ENCODE measurements at regions of chr6 and their contacts with region 1.

Region 1: DNA sequence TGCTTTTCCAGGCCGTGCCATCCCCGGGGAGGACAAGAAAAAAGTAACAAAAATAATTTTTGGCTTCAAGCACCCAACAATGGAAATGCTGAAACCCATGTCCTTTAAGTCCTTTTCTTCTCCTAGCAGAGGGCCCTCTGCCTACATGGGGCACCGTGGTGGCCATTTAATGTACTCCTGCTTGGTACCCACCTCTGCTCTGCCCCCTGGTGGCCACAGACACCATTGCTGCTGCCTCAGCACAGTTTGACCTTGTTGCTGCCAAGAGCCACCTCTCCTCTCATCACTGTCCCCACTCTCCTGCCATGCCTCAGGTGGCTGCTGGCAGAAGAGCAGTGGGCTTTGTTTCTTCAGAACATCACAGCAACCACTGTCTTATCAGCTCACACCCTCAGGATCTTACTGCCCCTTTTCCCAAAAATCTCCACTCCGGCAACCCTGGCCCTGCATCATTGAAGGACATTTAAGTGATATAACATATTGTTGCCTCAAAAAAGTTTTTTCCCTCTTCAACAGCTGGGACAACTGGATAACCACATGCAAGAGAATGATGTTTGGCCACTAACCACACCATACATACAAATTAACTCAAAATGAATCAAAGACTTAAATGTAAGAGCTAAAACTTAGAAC is 12.9 kb upstream of the ARMC2 start:
- DNase-seq: peak; percentile 86
- ATAC-seq: peak; percentile 96
- H3K4me3 ChIP-seq: no peak overlapping the region
- H3K4me3 Mint-ChIP-seq: no peak overlapping the region
- H3K27ac ChIP-seq: no peak overlapping the region
- H3K27ac Mint-ChIP-seq: no peak overlapping the region
- H3K4me1 ChIP-seq: peaks cover 14 to 17% of the 10 kb centered on the region in 2 donors
- H3K4me1 Mint-ChIP-seq: peaks cover 25% of the 10 kb centered on the region
- H3K27me3 ChIP-seq: peaks cover 0 to 6% (median 2%) of the 10 kb centered on the region in 4 experiments
- H3K27me3 Mint-ChIP-seq: peaks cover 15% of the 10 kb centered on the region
- CTCF ChIP-seq: peak; percentile 92

Region 2: GRCh38 chr6:108541838-108542759 is 293.2 kb before region 1 on chr6:
- CTCF ChIA-PET with region 1: interaction called, 107 read pairs
- POLR2A ChIA-PET with region 1: no interaction called
- intact Hi-C with region 1: loop called (anchors 1 kb)
- DNase-seq: peak; percentile 87
- ATAC-seq: peak; percentile 84
- H3K4me3 ChIP-seq: no peak overlapping the region
- H3K4me3 Mint-ChIP-seq: no peak overlapping the region
- H3K27ac ChIP-seq: no peak overlapping the region
- H3K27ac Mint-ChIP-seq: no peak overlapping the region
- H3K4me1 ChIP-seq: peaks cover 15 to 17% of the 10 kb centered on the region in 2 donors
- H3K4me1 Mint-ChIP-seq: peaks cover 12% of the 10 kb centered on the region
- H3K27me3 ChIP-seq: peaks cover 0 to 2% (median 0%) of the 10 kb centered on the region in 4 experiments
- H3K27me3 Mint-ChIP-seq: peaks cover 9% of the 10 kb centered on the region
- CTCF ChIP-seq: peak; percentile 93

Region 3: GRCh38 chr6:108592371-108593337 is 242.7 kb before region 1 on chr6:
- CTCF ChIA-PET with region 1: no interaction called
- POLR2A ChIA-PET with region 1: no interaction called
- intact Hi-C with region 1: no loop called
- DNase-seq: peak; percentile 70
- ATAC-seq: peak; percentile 80
- H3K4me3 ChIP-seq: no peak overlapping the region
- H3K4me3 Mint-ChIP-seq: peak overlapping the region; percentile 28
- H3K27ac ChIP-seq: peak overlapping the region; percentile 40 to 46
- H3K27ac Mint-ChIP-seq: peak overlapping the region; percentile 74
- H3K4me1 ChIP-seq: peaks cover 49 to 62% of the 10 kb centered on the region in 2 donors
- H3K4me1 Mint-ChIP-seq: peaks cover 82% of the 10 kb centered on the region
- H3K27me3 ChIP-seq: no peaks in the 10 kb centered on the region
- H3K27me3 Mint-ChIP-seq: no peaks in the 10 kb centered on the region
- CTCF ChIP-seq: no peak

Region 4: GRCh38 chr6:108782179-108783041 is 52.9 kb before region 1 on chr6:
- CTCF ChIA-PET with region 1: interaction called, 8 read pairs
- POLR2A ChIA-PET with region 1: no interaction called
- intact Hi-C with region 1: loop called (anchors 1 kb)
- DNase-seq: peak; percentile 84
- ATAC-seq: peak; percentile 96
- H3K4me3 ChIP-seq: peak overlapping the region; percentile 43 to 78 (median 59)
- H3K4me3 Mint-ChIP-seq: peak overlapping the region; percentile 81
- H3K27ac ChIP-seq: no peak overlapping the region
- H3K27ac Mint-ChIP-seq: no peak overlapping the region
- H3K4me1 ChIP-seq: peaks cover 23 to 31% of the 10 kb centered on the region in 2 donors
- H3K4me1 Mint-ChIP-seq: peaks cover 25% of the 10 kb centered on the region
- H3K27me3 ChIP-seq: peaks cover 0 to 20% (median 8%) of the 10 kb centered on the region in 4 experiments
- H3K27me3 Mint-ChIP-seq: peaks cover 27% of the 10 kb centered on the region
- CTCF ChIP-seq: peak; percentile 84

Region 5: DNA sequence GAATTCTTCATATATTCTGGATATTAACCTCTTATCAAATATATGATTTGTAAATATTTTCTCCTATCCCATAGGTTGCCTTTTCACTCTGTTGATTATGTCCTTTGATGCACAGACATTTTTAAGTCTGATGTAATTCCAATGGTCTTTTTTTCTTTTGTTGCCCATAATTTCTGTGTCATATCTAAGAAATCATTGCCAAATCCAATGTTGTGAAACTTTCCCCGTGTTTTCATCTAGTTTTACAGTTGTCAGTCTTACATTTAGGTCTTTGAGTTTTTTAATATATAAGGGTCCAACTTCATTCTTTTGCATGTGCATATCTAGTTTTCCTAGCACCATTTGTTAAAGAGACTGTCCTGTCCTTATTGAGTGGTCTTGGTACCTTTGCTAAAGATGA is 147.8 kb after region 1 on chr6:
- CTCF ChIA-PET with region 1: no interaction called
- POLR2A ChIA-PET with region 1: no interaction called
- intact Hi-C with region 1: no loop called
- DNase-seq: no peak
- ATAC-seq: no peak
- H3K4me3 ChIP-seq: no peak overlapping the region
- H3K4me3 Mint-ChIP-seq: no peak overlapping the region
- H3K27ac ChIP-seq: no peak overlapping the region
- H3K27ac Mint-ChIP-seq: no peak overlapping the region
- H3K4me1 ChIP-seq: no peaks in the 10 kb centered on the region
- H3K4me1 Mint-ChIP-seq: no peaks in the 10 kb centered on the region
- H3K27me3 ChIP-seq: no peaks in the 10 kb centered on the region
- H3K27me3 Mint-ChIP-seq: no peaks in the 10 kb centered on the region
- CTCF ChIP-seq: no peak